Activated T-helper 2 cell treated with anti-CD3 and anti-CD28 coated beads, Interferon-gamma antibody, Interleukin-2, Interleukin-4, amounts not matched to agents 10 μg/mL and 5 μg/mL and 100 μg/mL, durations not matched to agents 14 hours and 24 hours and 36 hours (primary cell): ENCODE measurements at regions of chr12 and their contacts with region 1.

Region 1: GRCh38 chr12:19915392-19916195 is 452.7 kb upstream of the PDE3A start:
- DNase-seq: no peak
- H3K4me3 Mint-ChIP-seq: no peak overlapping the region
- H3K27ac Mint-ChIP-seq: no peak overlapping the region
- H3K4me1 Mint-ChIP-seq: peaks cover 1% of the 10 kb centered on the region
- H3K27me3 Mint-ChIP-seq: no peaks in the 10 kb centered on the region

Region 2: GRCh38 chr12:19462406-19462805 is 453.2 kb before region 1 on chr12:
- intact Hi-C with region 1: no loop called
- DNase-seq: no peak
- H3K4me3 Mint-ChIP-seq: no peak overlapping the region
- H3K27ac Mint-ChIP-seq: no peak overlapping the region
- H3K4me1 Mint-ChIP-seq: peaks cover 27% of the 10 kb centered on the region
- H3K27me3 Mint-ChIP-seq: no peaks in the 10 kb centered on the region

Region 3: DNA sequence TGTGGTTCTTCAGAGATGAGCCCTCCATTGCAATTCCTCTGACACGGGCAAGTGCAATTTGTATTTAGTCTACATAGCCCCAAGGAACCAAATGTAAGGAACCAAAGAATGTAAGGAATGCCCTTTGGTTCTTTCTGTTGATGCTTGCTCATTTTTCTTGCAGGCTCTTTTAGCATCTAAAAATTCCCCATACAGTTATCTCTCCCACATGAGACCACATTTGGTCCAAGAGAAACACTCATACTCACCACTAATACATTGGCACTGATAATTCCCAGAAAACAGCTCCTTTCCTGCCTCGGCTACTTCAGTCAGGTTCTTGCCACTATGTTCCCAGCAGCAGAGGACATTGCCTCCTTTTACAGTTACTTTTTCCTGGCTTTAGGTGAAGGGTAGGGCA is 143.7 kb before region 1 on chr12:
- intact Hi-C with region 1: no loop called
- DNase-seq: no peak
- H3K4me3 Mint-ChIP-seq: no peak overlapping the region
- H3K27ac Mint-ChIP-seq: no peak overlapping the region
- H3K4me1 Mint-ChIP-seq: peaks cover 2% of the 10 kb centered on the region
- H3K27me3 Mint-ChIP-seq: peaks cover 2% of the 10 kb centered on the region

Region 4: GRCh38 chr12:20369305-20370005 is 453.9 kb after region 1 on chr12:
- intact Hi-C with region 1: loop called (anchors 10 kb)
- DNase-seq: no peak
- H3K4me3 Mint-ChIP-seq: peak overlapping the region; percentile 8
- H3K27ac Mint-ChIP-seq: no peak overlapping the region
- H3K4me1 Mint-ChIP-seq: no peaks in the 10 kb centered on the region
- H3K27me3 Mint-ChIP-seq: peaks cover 44% of the 10 kb centered on the region